OCI-LY7 (cell line): ENCODE measurements at regions of chr10 and their contacts with region 1.

Region 1: GRCh38 chr10:110803830-110804338 is 67.8 kb upstream of the PDCD4 start:
- DNase-seq: peak; percentile 74
- H3K4me3 ChIP-seq: peak overlapping the region; percentile 42
- H3K27ac ChIP-seq: peak overlapping the region; percentile 41
- H3K4me1 ChIP-seq: peaks cover 41% of the 10 kb centered on the region
- CTCF ChIP-seq: peak; percentile 96

Region 2: DNA sequence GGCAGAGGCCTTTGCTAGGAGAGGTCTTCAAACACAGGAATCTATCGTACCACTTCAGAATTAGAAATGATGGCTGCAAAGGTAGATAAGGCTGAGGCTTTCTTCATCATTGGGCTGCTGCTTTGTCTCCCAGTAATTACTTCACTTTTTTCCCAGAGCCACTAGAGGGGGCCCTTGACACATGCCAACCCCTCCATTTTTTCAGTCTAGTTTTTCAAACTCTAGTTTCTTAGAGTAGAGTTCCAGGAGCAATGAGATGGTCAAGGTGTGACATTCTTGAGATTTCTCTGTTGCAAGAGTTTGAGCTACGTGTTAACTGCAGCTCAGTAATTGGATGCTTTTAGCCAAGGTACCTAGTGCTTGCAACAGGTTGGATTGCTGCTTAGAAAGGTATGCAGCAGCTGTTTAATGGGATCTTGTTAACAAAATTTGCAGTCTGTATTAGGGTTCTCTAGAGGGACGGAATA is 193.5 kb before region 1 on chr10:
- CTCF ChIA-PET with region 1: no interaction called
- POLR2A ChIA-PET with region 1: interaction called, 3 read pairs
- intact Hi-C with region 1: loop called (anchors 1 kb)
- DNase-seq: peak; percentile 76
- H3K4me3 ChIP-seq: no peak overlapping the region
- H3K27ac ChIP-seq: no peak overlapping the region
- H3K4me1 ChIP-seq: peaks cover 29% of the 10 kb centered on the region
- CTCF ChIP-seq: peak; percentile 98

Region 3: GRCh38 chr10:110822712-110823323 is 18.9 kb after region 1 on chr10:
- CTCF ChIA-PET with region 1: interaction called, 5 read pairs
- POLR2A ChIA-PET with region 1: interaction called, 12 read pairs
- intact Hi-C with region 1: no loop called
- DNase-seq: no peak
- H3K4me3 ChIP-seq: no peak overlapping the region
- H3K27ac ChIP-seq: no peak overlapping the region
- H3K4me1 ChIP-seq: peaks cover 42% of the 10 kb centered on the region
- CTCF ChIP-seq: no peak

Region 4: GRCh38 chr10:110857265-110858158 is 53.6 kb after region 1 on chr10:
- CTCF ChIA-PET with region 1: interaction called, 5 read pairs
- POLR2A ChIA-PET with region 1: interaction called, 27 read pairs
- intact Hi-C with region 1: no loop called
- DNase-seq: peak; percentile 84
- H3K4me3 ChIP-seq: peak overlapping the region; percentile 11
- H3K27ac ChIP-seq: peak overlapping the region; percentile 91
- H3K4me1 ChIP-seq: peaks cover 75% of the 10 kb centered on the region
- CTCF ChIP-seq: no peak

Region 5: GRCh38 chr10:110871298-110872084 is 67.6 kb after region 1 on chr10 and contains the start of gene PDCD4:
- CTCF ChIA-PET with region 1: interaction called, 3 read pairs
- POLR2A ChIA-PET with region 1: interaction called, 27 read pairs
- intact Hi-C with region 1: loop called (anchors 1 kb)
- DNase-seq: peak; percentile 93
- H3K4me3 ChIP-seq: peak within 1 kb of the TSS; percentile 74
- H3K27ac ChIP-seq: peak within 1 kb of the TSS; percentile 92
- H3K4me1 ChIP-seq: peaks cover 69% of the 10 kb centered on the region
- CTCF ChIP-seq: no peak
- total RNA-seq, gene PDCD4: 59.0 and 70.6 TPM in 2 replicates

Region 6: GRCh38 chr10:110901954-110902819 is 98.3 kb after region 1 on chr10:
- CTCF ChIA-PET with region 1: no interaction called
- POLR2A ChIA-PET with region 1: interaction called, 19 read pairs
- intact Hi-C with region 1: no loop called
- DNase-seq: no peak
- H3K4me3 ChIP-seq: no peak overlapping the region
- H3K27ac ChIP-seq: no peak overlapping the region
- H3K4me1 ChIP-seq: peaks cover 7% of the 10 kb centered on the region
- CTCF ChIP-seq: no peak

Region 7: GRCh38 chr10:111186358-111186757 is 382.5 kb after region 1 on chr10:
- CTCF ChIA-PET with region 1: no interaction called
- POLR2A ChIA-PET with region 1: no interaction called
- intact Hi-C with region 1: no loop called
- DNase-seq: no peak
- H3K4me3 ChIP-seq: no peak overlapping the region
- H3K27ac ChIP-seq: no peak overlapping the region
- H3K4me1 ChIP-seq: no peaks in the 10 kb centered on the region
- CTCF ChIP-seq: no peak